Activated naive CD4-positive, alpha-beta T cell treated with anti-CD3 and anti-CD28 coated beads for 36 hours (primary cell): ENCODE measurements at regions of chr10 and their contacts with region 1.

Region 1: DNA sequence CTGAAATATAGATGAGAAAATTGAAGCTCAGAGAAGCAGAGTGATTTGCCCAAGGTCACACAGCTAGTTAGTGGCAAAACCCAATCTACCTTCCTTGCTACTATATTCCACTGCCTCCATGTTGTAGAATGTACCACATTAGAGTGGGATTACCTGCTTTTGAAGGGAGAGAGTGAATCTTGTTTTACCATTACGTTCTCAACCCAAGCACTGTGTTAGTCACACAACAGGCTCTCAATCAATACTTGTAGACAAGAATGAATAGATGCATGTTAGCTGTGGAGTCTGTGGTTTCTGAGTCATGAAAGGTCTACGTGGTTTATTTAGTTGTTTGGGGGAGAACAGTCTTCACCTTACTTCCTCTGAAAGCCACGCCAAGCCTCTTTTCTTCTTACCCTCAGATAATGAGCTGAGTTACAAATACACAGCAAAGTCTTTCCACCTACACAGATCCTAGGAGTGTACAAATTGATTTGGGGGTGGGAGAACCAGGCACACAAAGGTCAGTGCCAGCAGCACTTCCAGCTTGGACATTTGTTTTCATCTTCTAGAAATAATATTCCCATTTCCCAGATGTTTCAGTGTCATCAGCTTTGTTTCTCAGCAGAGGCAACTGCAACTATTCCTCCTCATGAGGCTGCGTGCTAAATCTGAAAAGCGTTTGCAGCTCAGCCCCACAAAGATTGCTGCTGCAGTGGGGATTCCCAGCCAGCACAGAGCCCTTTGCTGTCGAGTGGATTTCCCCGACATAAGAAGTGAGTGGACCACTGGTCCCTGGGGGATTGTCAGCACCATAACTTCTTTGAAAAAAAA is 71.5 kb upstream of the ADO start:
- DNase-seq: peak; percentile 67
- H3K4me3 Mint-ChIP-seq: peak overlapping the region; percentile 26
- H3K27ac Mint-ChIP-seq: no peak overlapping the region
- H3K4me1 Mint-ChIP-seq: peaks cover 20% of the 10 kb centered on the region
- H3K27me3 Mint-ChIP-seq: peaks cover 5% of the 10 kb centered on the region

Region 2: DNA sequence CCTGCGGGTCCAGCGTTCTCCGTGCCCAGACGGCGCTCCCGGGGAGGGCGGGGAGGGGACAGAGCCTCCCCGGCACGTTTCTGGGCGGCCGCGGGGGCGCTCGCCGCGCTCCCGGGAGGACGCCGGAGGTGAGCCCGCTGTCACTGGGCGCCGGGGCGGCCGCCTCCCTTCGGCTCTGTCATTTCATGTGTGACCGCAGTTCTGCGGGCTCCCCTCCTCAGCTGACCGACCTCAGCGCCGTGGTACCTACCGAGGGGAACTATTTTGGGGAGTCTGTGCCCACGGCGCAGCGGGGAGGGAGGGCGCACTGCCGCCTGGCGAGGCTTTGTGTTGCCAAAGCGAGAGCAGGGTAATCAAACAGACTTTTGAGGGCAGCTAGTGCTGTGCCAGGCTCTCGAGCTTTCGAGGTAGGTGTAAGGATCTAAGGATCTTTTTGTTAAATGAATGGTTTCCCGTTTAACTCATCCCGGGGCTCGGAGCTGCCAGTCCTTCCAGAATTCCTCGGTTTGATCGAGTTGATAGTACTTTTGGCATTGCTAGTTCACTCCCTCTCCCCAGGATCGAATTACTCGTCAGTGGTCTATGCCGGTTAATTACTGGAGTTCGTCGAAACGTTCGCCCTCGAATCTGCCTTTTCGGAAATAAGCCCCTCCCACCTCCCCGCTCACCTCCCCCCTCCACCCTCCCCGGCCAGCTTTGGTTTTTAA is 829.7 kb before region 1 on chr10:
- CTCF ChIA-PET with region 1: no interaction called
- intact Hi-C with region 1: loop called (anchors 5 kb)
- DNase-seq: peak; percentile 74
- H3K4me3 Mint-ChIP-seq: peak overlapping the region; percentile 99
- H3K27ac Mint-ChIP-seq: peak overlapping the region; percentile 100
- H3K4me1 Mint-ChIP-seq: peaks cover 42% of the 10 kb centered on the region
- H3K27me3 Mint-ChIP-seq: no peaks in the 10 kb centered on the region

Region 3: DNA sequence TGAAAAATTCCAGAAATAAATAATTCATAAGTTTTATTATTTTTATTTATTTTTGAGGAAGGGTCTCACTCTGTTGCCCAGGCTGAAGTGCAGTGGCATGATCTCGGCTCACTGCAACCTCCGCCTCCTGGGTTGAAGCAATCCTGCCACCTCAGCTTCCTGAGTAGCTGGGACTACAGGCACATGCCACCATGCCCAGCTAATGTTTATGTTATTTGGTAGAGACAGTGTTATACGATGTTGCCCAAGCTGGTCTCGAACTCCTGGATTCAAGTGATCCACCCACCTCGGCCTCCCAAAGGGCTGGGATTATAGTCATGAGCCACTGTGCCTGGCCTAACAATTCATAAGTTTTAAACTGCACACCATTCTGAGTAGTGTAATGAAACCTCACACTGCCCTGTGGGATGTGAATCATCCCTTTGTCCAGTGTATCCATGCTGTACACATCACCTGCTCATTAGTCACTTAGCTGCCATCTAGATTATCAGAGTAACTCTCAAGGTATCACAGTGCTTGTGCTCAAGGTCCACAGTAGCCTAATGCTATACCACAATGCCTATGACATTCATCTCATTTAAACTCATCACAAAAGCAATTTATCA is 482.4 kb before region 1 on chr10:
- CTCF ChIA-PET with region 1: no interaction called
- intact Hi-C with region 1: loop called (anchors 5 kb)
- DNase-seq: peak; percentile 8
- H3K4me3 Mint-ChIP-seq: no peak overlapping the region
- H3K27ac Mint-ChIP-seq: no peak overlapping the region
- H3K4me1 Mint-ChIP-seq: peaks cover 45% of the 10 kb centered on the region
- H3K27me3 Mint-ChIP-seq: no peaks in the 10 kb centered on the region

Region 4: GRCh38 chr10:62610649-62611229 is 122.3 kb before region 1 on chr10:
- CTCF ChIA-PET with region 1: interaction called, 4 read pairs
- intact Hi-C with region 1: loop called (anchors 2 kb)
- DNase-seq: peak; percentile 83
- H3K4me3 Mint-ChIP-seq: no peak overlapping the region
- H3K27ac Mint-ChIP-seq: no peak overlapping the region
- H3K4me1 Mint-ChIP-seq: peaks cover 31% of the 10 kb centered on the region
- H3K27me3 Mint-ChIP-seq: peaks cover 5% of the 10 kb centered on the region

Region 5: GRCh38 chr10:62626817-62627216 is 106.2 kb before region 1 on chr10:
- CTCF ChIA-PET with region 1: no interaction called
- intact Hi-C with region 1: no loop called
- DNase-seq: no peak
- H3K4me3 Mint-ChIP-seq: no peak overlapping the region
- H3K27ac Mint-ChIP-seq: no peak overlapping the region
- H3K4me1 Mint-ChIP-seq: peaks cover 7% of the 10 kb centered on the region
- H3K27me3 Mint-ChIP-seq: no peaks in the 10 kb centered on the region

Region 6: DNA sequence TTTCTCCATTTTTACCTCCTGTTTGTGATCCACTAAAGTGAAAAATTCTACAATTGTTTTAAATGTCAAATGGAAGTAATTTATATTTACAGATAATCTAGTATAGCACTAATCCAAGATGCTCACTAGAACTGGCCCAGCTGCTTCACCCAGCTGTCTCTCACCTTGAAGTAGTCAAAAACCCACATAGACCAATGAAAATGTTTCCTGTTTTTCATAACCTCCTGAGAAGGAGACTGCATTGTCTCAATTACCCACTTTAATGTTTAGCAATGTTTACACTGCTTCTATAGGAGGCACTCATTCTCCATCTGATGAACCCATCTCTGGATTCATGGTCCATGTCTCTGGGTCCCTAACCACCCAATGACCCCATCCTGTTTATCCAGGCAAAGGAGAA is 15.3 kb after region 1 on chr10:
- CTCF ChIA-PET with region 1: interaction called, 18 read pairs
- intact Hi-C with region 1: loop called (anchors 1 kb)
- DNase-seq: no peak
- H3K4me3 Mint-ChIP-seq: no peak overlapping the region
- H3K27ac Mint-ChIP-seq: no peak overlapping the region
- H3K4me1 Mint-ChIP-seq: peaks cover 26% of the 10 kb centered on the region
- H3K27me3 Mint-ChIP-seq: no peaks in the 10 kb centered on the region

Region 7: GRCh38 chr10:62804356-62805230 is 71.5 kb after region 1 on chr10 and contains the start of gene ADO:
- CTCF ChIA-PET with region 1: interaction called, 3 read pairs
- intact Hi-C with region 1: loop called (anchors 1 kb)
- DNase-seq: peak; percentile 82
- H3K4me3 Mint-ChIP-seq: peak within 1 kb of the TSS; percentile 97
- H3K27ac Mint-ChIP-seq: peak within 1 kb of the TSS; percentile 100
- H3K4me1 Mint-ChIP-seq: peaks cover 37% of the 10 kb centered on the region
- H3K27me3 Mint-ChIP-seq: no peaks in the 10 kb centered on the region
- total RNA-seq, gene ADO: 24.9 to 26.2 TPM

Region 8: GRCh38 chr10:62992145-62992721 is 259.2 kb after region 1 on chr10:
- CTCF ChIA-PET with region 1: no interaction called
- intact Hi-C with region 1: loop called (anchors 1 kb)
- DNase-seq: peak; percentile 24
- H3K4me3 Mint-ChIP-seq: peak overlapping the region; percentile 1
- H3K27ac Mint-ChIP-seq: peak overlapping the region; percentile 71
- H3K4me1 Mint-ChIP-seq: peaks cover 43% of the 10 kb centered on the region
- H3K27me3 Mint-ChIP-seq: peaks cover 3% of the 10 kb centered on the region